CD8-positive, alpha-beta T cell (primary cell): ENCODE measurements at regions of chr13 and their contacts with region 1.

Region 1: GRCh38 chr13:99281811-99282263 is 23.7 kb upstream of the GPR18 start:
- DNase-seq: peak in 6 of 9 experiments; percentile 59 to 81 (median 71)
- ATAC-seq: peak; percentile 65
- H3K4me3 ChIP-seq: no peak overlapping the region
- H3K4me3 Mint-ChIP-seq: peak overlapping the region; percentile 38
- H3K27ac ChIP-seq: peak overlapping the region; percentile 53 to 73
- H3K27ac Mint-ChIP-seq: peak overlapping the region; percentile 95
- H3K4me1 ChIP-seq: peaks cover 92% of the 10 kb centered on the region
- H3K4me1 Mint-ChIP-seq: peaks cover 90% of the 10 kb centered on the region
- H3K27me3 ChIP-seq: no peaks in the 10 kb centered on the region
- H3K27me3 Mint-ChIP-seq: no peaks in the 10 kb centered on the region
- CTCF ChIP-seq: no peak

Region 2: DNA sequence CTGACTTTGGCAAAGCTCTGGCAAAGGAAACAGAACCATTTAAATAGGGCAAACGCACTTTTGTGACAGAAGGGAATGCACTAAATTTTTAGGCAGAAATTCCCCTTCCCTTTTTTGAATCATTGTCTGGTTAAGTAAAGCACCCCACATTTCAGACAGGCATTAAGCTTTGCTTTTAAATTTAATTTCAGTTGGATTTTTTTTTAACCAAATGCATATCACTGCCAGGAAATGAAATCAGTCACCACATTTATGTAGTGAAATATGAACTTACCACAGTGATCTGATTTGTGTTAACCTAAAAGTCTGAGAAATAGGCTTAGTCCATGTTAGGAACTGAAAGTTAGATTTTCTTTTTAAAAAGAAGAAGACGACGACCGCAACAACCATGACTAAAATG is 14.6 kb after region 1 on chr13:
- CTCF ChIA-PET with region 1: interaction called, 3 read pairs
- POLR2A ChIA-PET with region 1: interaction called, 7 read pairs
- intact Hi-C with region 1: loop called in 1 of 2 experiments (anchors 1 kb)
- DNase-seq: peak in 2 of 9 experiments; percentile 48 to 70
- ATAC-seq: peak; percentile 80
- H3K4me3 ChIP-seq: peak overlapping the region; percentile 1 to 2
- H3K4me3 Mint-ChIP-seq: peak overlapping the region; percentile 78
- H3K27ac ChIP-seq: peak overlapping the region in 1 of 2 experiments; percentile 49
- H3K27ac Mint-ChIP-seq: peak overlapping the region; percentile 93
- H3K4me1 ChIP-seq: peaks cover 64% of the 10 kb centered on the region
- H3K4me1 Mint-ChIP-seq: peaks cover 81% of the 10 kb centered on the region
- H3K27me3 ChIP-seq: no peaks in the 10 kb centered on the region
- H3K27me3 Mint-ChIP-seq: no peaks in the 10 kb centered on the region
- CTCF ChIP-seq: no peak